WTC11 (cell line): ENCODE measurements at regions of chr9 and their contacts with region 1.

Region 1: GRCh38 chr9:122159026-122159924 is at the starts of genes MORN5 and NDUFA8:
- DNase-seq: peak; percentile 99
- ATAC-seq: peak; percentile 96
- H3K4me3 Mint-ChIP-seq: peak within 1 kb of the TSS; percentile 96
- H3K27ac Mint-ChIP-seq: peak within 1 kb of the TSS; percentile 93
- H3K4me1 Mint-ChIP-seq: peaks cover 19% of the 10 kb centered on the region
- H3K27me3 Mint-ChIP-seq: peaks cover 31% of the 10 kb centered on the region
- CTCF ChIP-seq: no peak
- total RNA-seq, gene MORN5: not detected in 3 replicates
- total RNA-seq, gene NDUFA8: 70.7 to 71.8 TPM (median 71.2 TPM) in 3 replicates

Region 2: GRCh38 chr9:122144836-122145591 is 14.3 kb before region 1 on chr9:
- CTCF ChIA-PET with region 1: interaction called, 15 read pairs
- POLR2A ChIA-PET with region 1: no interaction called
- DNase-seq: no peak
- ATAC-seq: no peak; the same call in 1 of the 2 replicates
- H3K4me3 Mint-ChIP-seq: no peak overlapping the region
- H3K27ac Mint-ChIP-seq: no peak overlapping the region
- H3K4me1 Mint-ChIP-seq: no peaks in the 10 kb centered on the region
- H3K27me3 Mint-ChIP-seq: no peaks in the 10 kb centered on the region
- CTCF ChIP-seq: no peak